ENCODE measurements at regions of chr4 and their contacts with region 1.

Region 1: DNA sequence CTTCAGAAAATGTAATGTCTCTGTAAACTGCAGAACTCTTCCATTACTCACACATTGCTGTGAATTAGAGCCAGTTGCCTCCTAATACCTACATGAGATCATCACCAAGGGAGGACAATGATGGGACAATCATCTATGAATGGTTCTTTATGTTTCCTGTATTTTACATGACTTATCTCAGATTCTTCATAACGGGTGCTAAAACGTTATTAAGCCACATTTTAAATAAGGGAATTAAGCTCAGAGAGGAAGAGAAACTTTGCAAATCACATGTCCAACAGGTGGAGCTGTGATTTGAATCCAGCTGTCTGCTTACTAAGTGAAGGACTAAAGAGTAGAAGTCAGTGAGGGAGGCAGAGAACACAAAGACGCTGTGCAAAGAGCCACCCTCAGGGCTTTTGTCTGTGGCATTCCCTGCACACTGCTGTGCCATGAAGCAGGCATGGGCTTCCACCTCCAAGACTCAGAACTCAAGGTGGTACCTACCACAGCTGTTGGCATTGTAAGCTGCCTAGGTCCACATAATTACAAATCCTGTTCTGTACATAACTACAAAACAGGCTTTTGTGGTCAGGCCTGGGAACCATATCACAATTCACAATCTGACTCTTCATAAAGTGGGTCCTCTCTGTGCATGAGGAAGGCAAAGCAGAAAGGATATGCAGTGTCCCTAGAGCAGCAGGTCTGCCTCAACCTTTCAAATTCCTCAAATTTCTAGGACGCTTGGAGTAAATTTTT is 12.8 kb downstream of the TBC1D9 start:
- DNase-seq: peak; percentile 51
- ATAC-seq: peak; percentile 85
- H3K4me3 ChIP-seq: no peak overlapping the region
- H3K27ac ChIP-seq: peak overlapping the region; percentile 52
- H3K4me1 ChIP-seq: peaks cover 68% of the 10 kb centered on the region
- H3K27me3 ChIP-seq: no peaks in the 10 kb centered on the region
- CTCF ChIP-seq: peak; percentile 57
- EP300 ChIP-seq: no peak
- POLR2A ChIP-seq: no peak
- RAD21 ChIP-seq: no peak; the same call in 1 of the 2 replicates

Region 2: DNA sequence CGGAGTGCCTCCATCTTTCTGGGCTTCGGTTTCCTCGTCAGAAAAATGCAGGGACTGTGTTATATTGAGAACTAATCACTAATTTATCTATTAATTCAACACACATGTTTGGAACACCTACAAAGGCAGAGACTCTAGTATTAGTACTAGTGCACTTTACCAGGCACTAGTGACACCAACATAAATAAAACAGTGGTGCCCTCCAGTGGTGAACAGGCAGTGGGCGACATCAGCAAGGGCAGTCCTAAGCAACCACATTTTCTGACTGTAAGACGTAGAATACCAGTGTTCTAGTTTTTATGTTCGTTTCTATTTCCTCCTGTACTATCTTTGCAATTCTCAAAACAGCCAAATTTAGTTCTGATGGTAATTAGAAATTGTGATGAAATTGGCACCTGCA is 105.5 kb before region 1 on chr4:
- CTCF ChIA-PET with region 1: no interaction called
- POLR2A ChIA-PET with region 1: no interaction called
- in situ Hi-C with region 1: no loop called
- intact Hi-C with region 1: loop called (anchors 5 kb)
- DNase-seq: peak; percentile 59
- ATAC-seq: peak; percentile 19; the same call in 1 of the 3 replicates
- H3K4me3 ChIP-seq: no peak overlapping the region
- H3K27ac ChIP-seq: no peak overlapping the region
- H3K4me1 ChIP-seq: peaks cover 82% of the 10 kb centered on the region
- H3K27me3 ChIP-seq: no peaks in the 10 kb centered on the region
- CTCF ChIP-seq: peak; percentile 79
- EP300 ChIP-seq: no peak
- POLR2A ChIP-seq: no peak
- RAD21 ChIP-seq: peak; percentile 45; the same call in 1 of the 2 replicates

Region 3: DNA sequence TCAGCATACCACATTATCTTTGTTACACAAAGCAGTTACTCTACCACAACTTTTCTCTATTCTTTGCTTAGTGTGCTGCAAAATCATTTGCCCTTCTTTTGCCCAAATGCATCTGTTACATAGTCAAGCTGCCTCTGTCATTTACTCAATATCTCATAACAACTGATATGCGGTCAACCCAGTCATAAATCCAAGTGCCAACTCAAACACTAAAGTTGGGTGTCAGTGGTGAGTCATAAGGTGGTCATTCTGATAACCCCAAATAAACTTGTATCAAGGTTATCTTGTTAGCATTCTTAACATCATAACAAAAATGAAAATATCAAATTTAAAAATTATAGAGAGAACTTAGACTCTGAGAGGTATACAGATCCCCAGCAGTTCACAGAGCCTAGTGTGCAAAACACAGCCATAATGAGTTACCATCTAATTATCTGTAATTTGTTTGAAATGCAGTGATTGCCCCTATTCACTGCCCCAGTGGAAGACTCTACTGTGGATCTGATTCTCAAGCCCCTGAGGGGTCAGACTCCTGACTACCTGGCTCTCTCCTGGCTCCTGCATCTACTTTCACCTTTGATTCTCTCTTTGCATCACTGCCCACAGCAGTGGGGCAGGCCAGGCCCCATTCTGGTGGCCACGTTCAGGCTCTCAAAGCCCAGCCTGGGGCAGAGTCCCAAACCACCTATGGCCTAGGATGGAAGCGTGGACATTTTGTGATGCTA is 16.4 kb before region 1 on chr4:
- CTCF ChIA-PET with region 1: no interaction called
- POLR2A ChIA-PET with region 1: interaction called, 3 read pairs
- in situ Hi-C with region 1: no loop called
- intact Hi-C with region 1: loop called (anchors 1 kb)
- DNase-seq: no peak
- ATAC-seq: peak; percentile 21
- H3K4me3 ChIP-seq: no peak overlapping the region
- H3K27ac ChIP-seq: peak overlapping the region; percentile 94
- H3K4me1 ChIP-seq: peaks cover 73% of the 10 kb centered on the region
- H3K27me3 ChIP-seq: no peaks in the 10 kb centered on the region
- CTCF ChIP-seq: no peak
- EP300 ChIP-seq: no peak
- POLR2A ChIP-seq: no peak
- RAD21 ChIP-seq: no peak

Measured in HepG2 (cell line).